ENCODE measurements at regions of chr12 and their contacts with region 1.

Region 1: GRCh38 chr12:110304061-110304551 is 23.1 kb downstream of the ATP2A2 start:
- DNase-seq: no peak
- ATAC-seq: no peak
- H3K4me3 ChIP-seq: no peak overlapping the region
- H3K27ac ChIP-seq: no peak overlapping the region
- H3K4me1 ChIP-seq: no peaks in the 10 kb centered on the region
- H3K27me3 ChIP-seq: no peaks in the 10 kb centered on the region; a peak in 1 of 5 replicates
- CTCF ChIP-seq: no peak
- EP300 ChIP-seq: no peak
- POLR2A ChIP-seq: no peak
- RAD21 ChIP-seq: no peak

Region 2: GRCh38 chr12:110199339-110200123 is 104.6 kb before region 1 on chr12:
- CTCF ChIA-PET with region 1: no interaction called
- POLR2A ChIA-PET with region 1: no interaction called
- in situ Hi-C with region 1: no loop called
- intact Hi-C with region 1: no loop called
- DNase-seq: no peak
- ATAC-seq: no peak
- H3K4me3 ChIP-seq: no peak overlapping the region
- H3K27ac ChIP-seq: no peak overlapping the region
- H3K4me1 ChIP-seq: no peaks in the 10 kb centered on the region
- H3K27me3 ChIP-seq: no peaks in the 10 kb centered on the region
- CTCF ChIP-seq: no peak
- EP300 ChIP-seq: no peak
- POLR2A ChIP-seq: no peak
- RAD21 ChIP-seq: no peak

Region 3: GRCh38 chr12:110289044-110289710 is 14.9 kb before region 1 on chr12:
- CTCF ChIA-PET with region 1: no interaction called
- POLR2A ChIA-PET with region 1: interaction called, 40 read pairs
- in situ Hi-C with region 1: no loop called
- intact Hi-C with region 1: no loop called
- DNase-seq: no peak
- ATAC-seq: no peak
- H3K4me3 ChIP-seq: no peak overlapping the region
- H3K27ac ChIP-seq: 0 out of 3 replicates have a peak overlapping the region, but pooled peaks have one; percentile 12
- H3K4me1 ChIP-seq: peaks cover 5 to 12% of the 10 kb centered on the region in 2 experiments; a peak in 3 of 5 replicates
- H3K27me3 ChIP-seq: no peaks in the 10 kb centered on the region
- CTCF ChIP-seq: no peak
- EP300 ChIP-seq: no peak
- POLR2A ChIP-seq: no peak
- RAD21 ChIP-seq: no peak